ENCODE measurements at regions of chr3 and their contacts with region 1.

Region 1: GRCh38 chr3:134212906-134213665 is 37.6 kb downstream of the RYK start:
- DNase-seq: peak; percentile 90
- H3K4me3 Mint-ChIP-seq: no peak overlapping the region
- H3K27ac Mint-ChIP-seq: no peak overlapping the region
- H3K4me1 Mint-ChIP-seq: peaks cover 23% of the 10 kb centered on the region
- H3K27me3 Mint-ChIP-seq: no peaks in the 10 kb centered on the region

Region 2: DNA sequence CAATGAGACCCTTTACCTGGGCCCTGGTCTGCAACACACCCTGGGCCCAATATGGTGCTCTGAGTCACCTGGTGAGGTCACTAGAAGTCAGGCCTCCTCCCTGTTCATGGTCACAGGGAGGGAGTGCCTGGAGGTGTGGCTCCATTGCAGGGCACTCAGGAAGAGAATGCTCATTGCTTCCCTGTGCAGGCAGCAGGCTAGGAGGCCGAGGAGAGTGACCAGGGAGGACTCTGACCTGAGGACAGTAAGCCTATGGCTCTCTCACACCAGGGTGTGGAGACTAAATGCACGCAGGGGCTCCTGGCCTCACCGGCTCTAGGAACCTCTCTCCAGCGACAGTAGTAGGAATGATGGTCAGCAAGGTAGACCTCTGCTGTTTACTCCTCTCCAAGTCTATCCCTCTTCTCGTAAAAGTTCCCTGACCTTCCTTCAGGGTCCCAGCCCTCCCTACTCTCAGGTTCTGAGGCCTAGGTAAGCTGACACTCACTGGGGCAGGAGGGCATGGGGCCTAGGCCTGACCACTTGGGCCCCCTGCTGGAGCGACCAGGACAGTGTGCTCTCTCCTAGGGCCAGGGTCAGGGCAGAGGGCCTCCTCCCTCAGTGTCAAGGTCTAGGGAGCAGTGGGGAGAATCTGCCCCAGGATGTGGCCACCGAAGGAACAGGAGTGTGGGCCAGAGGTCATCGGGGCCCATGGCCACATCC is 173.8 kb before region 1 on chr3:
- CTCF ChIA-PET with region 1: no interaction called
- POLR2A ChIA-PET with region 1: no interaction called
- intact Hi-C with region 1: no loop called
- DNase-seq: no peak
- H3K4me3 Mint-ChIP-seq: no peak overlapping the region
- H3K27ac Mint-ChIP-seq: no peak overlapping the region
- H3K4me1 Mint-ChIP-seq: no peaks in the 10 kb centered on the region
- H3K27me3 Mint-ChIP-seq: peaks cover 4% of the 10 kb centered on the region

Region 3: DNA sequence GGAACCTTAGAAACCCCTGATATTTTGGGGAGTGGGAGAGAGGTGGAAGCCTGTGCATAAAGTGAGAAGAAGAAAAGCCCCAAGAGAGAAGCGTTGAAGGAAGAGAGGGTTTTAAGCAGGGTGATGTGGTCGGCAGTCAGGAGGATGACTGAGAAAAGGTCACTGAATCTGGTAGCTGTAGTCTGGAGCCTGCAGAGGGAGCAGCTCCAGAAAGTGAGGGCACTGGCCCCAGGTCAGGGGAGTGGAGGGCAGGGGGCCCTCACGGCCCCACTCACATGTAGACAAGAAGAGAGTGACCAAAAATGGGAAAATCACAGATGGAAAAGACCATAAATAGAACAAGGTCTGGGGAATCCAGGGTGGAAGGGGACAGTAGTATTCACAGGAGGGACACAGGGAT is 67.9 kb before region 1 on chr3:
- CTCF ChIA-PET with region 1: no interaction called
- POLR2A ChIA-PET with region 1: no interaction called
- intact Hi-C with region 1: no loop called
- DNase-seq: no peak
- H3K4me3 Mint-ChIP-seq: no peak overlapping the region
- H3K27ac Mint-ChIP-seq: no peak overlapping the region
- H3K4me1 Mint-ChIP-seq: peaks cover 2% of the 10 kb centered on the region
- H3K27me3 Mint-ChIP-seq: no peaks in the 10 kb centered on the region

Region 4: DNA sequence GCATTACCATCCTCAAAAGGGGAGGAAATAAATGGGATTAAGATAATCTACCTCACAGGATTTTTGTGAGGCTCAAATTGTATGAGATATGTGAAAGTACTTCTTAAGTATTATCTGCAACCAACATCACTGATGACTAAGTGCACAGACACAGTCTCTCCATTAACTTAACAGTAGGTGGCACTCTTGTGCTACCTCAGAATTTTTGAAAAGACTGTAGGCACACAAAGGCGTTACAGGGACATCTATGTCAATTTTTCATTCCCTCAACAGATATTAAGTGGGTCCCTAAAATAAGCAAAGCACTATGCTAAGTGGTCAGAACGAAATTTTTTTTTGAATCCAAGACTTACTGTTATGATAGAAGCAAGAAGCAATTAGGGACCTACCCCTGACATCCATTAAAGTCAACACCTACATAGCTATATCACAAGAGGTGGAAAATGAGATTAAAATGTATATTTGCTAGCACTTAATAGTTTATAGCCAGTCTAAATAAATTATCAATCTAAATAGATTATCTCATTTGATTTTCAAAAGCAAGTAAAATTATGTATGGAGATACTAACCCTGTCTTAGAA is 15.3 kb before region 1 on chr3:
- CTCF ChIA-PET with region 1: interaction called, 53 read pairs
- POLR2A ChIA-PET with region 1: no interaction called
- intact Hi-C with region 1: loop called (anchors 2 kb)
- DNase-seq: no peak
- H3K4me3 Mint-ChIP-seq: no peak overlapping the region
- H3K27ac Mint-ChIP-seq: no peak overlapping the region
- H3K4me1 Mint-ChIP-seq: peaks cover 10% of the 10 kb centered on the region
- H3K27me3 Mint-ChIP-seq: no peaks in the 10 kb centered on the region

Region 5: DNA sequence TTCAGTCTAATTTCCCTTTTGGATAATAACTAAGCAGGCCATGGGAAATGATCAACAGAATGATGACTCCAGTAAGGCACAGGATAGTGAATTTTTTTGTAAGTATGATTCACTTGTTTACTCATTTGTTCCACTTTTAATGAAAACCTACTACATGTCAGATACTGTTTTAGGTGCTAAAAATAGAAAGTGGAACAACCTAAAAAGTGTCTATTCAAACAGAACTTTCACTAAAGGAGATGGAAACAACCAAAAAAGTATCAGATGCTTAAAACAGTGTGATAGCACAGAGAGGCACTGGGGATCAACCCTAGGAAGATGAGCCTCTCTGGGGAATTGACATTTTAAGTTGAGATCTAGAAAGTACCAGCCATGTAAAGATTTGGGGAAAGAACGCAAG is 26.5 kb after region 1 on chr3:
- CTCF ChIA-PET with region 1: interaction called, 29 read pairs
- POLR2A ChIA-PET with region 1: no interaction called
- intact Hi-C with region 1: loop called (anchors 1 kb)
- DNase-seq: no peak
- H3K4me3 Mint-ChIP-seq: peak overlapping the region; percentile 1
- H3K27ac Mint-ChIP-seq: peak overlapping the region; percentile 58
- H3K4me1 Mint-ChIP-seq: peaks cover 79% of the 10 kb centered on the region
- H3K27me3 Mint-ChIP-seq: no peaks in the 10 kb centered on the region

Region 6: DNA sequence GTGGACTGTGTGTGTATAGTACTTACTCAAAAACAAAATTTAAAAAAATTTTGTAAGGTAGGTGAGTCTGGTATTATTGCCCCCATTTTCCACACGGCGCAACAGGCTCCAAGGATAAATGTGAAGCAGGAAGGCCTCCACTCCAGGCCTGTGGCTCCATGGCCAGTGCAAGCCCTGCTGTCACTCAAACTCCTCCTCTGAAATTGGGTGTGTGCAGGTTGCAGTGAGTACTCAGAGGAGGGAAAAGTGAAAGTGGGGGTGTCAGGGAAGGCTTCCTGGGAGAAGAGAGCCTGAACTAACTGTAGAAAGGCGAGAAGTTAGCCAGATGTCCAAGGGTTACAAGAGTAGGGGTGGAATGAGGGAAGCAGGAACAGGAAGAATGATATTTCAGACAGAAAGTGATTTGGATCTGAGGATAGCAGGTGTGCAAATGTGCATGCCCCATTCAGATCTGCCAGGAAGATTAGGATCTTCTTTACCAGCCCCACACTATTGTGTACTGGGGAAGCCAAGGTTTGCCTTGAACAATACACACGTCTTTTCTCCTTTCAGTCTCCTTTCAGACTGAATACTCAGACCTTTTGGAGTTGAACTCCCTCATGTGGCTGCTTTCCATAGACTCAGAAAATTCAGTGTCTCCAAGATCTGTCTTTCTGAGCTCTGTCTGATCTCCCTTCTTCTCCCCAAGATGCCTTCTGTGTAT is 86.2 kb after region 1 on chr3:
- CTCF ChIA-PET with region 1: interaction called, 9 read pairs
- POLR2A ChIA-PET with region 1: no interaction called
- intact Hi-C with region 1: loop called (anchors 1 kb)
- DNase-seq: no peak
- H3K4me3 Mint-ChIP-seq: no peak overlapping the region
- H3K27ac Mint-ChIP-seq: no peak overlapping the region
- H3K4me1 Mint-ChIP-seq: no peaks in the 10 kb centered on the region
- H3K27me3 Mint-ChIP-seq: peaks cover 21% of the 10 kb centered on the region

Region 7: GRCh38 chr3:134364061-134364935 is 151.2 kb after region 1 on chr3:
- CTCF ChIA-PET with region 1: interaction called, 4 read pairs
- POLR2A ChIA-PET with region 1: no interaction called
- intact Hi-C with region 1: loop called (anchors 5 kb)
- DNase-seq: peak; percentile 55
- H3K4me3 Mint-ChIP-seq: peak overlapping the region; percentile 56
- H3K27ac Mint-ChIP-seq: no peak overlapping the region
- H3K4me1 Mint-ChIP-seq: peaks cover 22% of the 10 kb centered on the region
- H3K27me3 Mint-ChIP-seq: no peaks in the 10 kb centered on the region

Region 8: GRCh38 chr3:134473868-134474546 is 260.9 kb after region 1 on chr3:
- CTCF ChIA-PET with region 1: interaction called, 105 read pairs
- POLR2A ChIA-PET with region 1: no interaction called
- intact Hi-C with region 1: loop called (anchors 1 kb)
- DNase-seq: peak; percentile 79
- H3K4me3 Mint-ChIP-seq: no peak overlapping the region
- H3K27ac Mint-ChIP-seq: no peak overlapping the region
- H3K4me1 Mint-ChIP-seq: no peaks in the 10 kb centered on the region
- H3K27me3 Mint-ChIP-seq: no peaks in the 10 kb centered on the region